ENCODE measurements at regions of chr7 and their contacts with region 1.

Region 1: DNA sequence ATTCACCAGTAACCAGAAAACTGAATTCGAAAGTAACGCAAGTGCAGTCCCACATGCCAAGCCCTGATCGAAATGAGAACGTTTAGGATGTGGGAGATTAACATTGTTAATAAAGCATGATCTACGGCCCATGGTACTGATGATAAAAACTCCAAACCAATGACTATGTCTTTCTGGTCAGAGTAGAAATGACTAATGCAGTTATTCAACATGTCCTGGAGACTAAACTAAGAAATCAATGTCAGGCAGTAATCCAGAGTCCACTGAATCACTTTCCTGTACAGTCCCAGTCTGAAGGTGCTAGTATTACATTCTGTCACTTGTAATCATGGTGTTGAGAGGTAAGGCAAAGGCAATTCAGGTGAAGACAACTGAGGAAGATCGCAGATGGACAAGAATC is 14.4 kb downstream of the NPSR1 start:
- DNase-seq: no peak
- H3K4me3 ChIP-seq: no peak overlapping the region
- H3K4me1 ChIP-seq: no peaks in the 10 kb centered on the region
- H3K27me3 ChIP-seq: no peaks in the 10 kb centered on the region

Region 2: DNA sequence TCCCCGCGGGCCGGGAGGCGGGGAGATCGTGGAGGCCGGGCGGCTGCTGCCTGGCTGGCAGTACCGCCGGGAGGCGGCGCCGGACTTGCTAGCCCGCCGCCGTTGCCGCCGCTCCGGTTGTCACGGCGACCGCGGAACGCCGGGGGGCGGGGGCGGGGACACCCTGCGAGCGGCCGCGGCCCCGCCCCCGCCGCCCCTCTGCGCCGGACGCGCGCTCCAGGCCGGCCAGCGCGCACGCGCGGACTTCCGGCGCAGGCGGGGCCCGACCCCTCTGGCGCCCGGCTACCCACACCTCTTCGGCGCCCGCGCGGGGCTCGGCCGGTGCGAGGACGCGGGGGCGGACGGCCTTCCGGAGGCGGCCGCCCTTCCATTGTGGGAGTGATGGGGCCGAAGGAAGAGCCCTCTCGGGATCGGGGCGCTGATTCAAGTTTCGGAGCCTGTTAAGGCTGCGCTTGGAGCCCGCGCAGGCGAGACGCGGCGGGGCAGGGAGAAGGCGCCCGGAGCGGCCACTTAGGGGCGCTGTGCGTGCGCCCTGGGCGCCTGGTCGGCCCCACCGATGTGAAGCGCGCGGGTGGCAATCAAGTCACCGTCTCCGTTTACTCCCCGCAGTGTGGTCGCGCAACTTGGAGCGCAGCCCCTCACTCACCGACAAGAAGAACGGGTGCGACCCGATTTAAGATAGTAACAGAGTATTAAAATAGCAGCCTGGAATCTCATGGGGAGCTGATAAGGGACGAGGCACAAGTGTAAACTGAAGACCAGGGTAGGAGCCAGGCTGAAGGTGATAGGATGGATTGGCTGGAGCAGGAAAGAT is 365.3 kb after region 1 on chr7:
- in situ Hi-C with region 1: loop called (anchors 25 kb)
- DNase-seq: peak; percentile 93 to 94
- H3K4me3 ChIP-seq: peak overlapping the region; percentile 59
- H3K4me1 ChIP-seq: peaks cover 11% of the 10 kb centered on the region
- H3K27me3 ChIP-seq: no peaks in the 10 kb centered on the region; the same call in 1 of the 2 replicates

Measured in HAP-1 (cell line).